GM23248 (cell line): ENCODE measurements at regions of chr12 and their contacts with region 1.

Region 1: DNA sequence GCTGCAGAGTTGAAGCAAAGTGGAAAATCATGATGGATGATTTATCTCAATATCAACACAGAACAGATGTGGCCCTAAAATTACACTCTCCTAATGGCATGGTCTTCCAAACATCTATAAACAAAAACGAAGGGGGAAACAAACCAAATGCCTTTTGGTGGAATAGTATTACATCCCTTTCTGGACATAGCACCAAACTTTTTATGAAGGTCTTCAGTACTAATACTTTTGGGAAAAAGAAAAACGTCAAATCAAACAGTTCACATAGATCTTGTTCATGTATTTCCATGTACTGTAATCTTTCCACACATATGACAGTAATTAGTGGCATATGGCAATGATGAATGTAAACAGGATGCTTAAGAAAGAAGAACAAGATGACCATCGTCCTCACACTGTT is 22.9 kb upstream of the ANAPC7 start:
- DNase-seq: no peak
- H3K4me3 ChIP-seq: no peak overlapping the region
- H3K27ac ChIP-seq: no peak overlapping the region
- H3K4me1 ChIP-seq: peaks cover 7% of the 10 kb centered on the region; the same call in 1 of the 2 replicates
- H3K27me3 ChIP-seq: no peaks in the 10 kb centered on the region

Region 2: DNA sequence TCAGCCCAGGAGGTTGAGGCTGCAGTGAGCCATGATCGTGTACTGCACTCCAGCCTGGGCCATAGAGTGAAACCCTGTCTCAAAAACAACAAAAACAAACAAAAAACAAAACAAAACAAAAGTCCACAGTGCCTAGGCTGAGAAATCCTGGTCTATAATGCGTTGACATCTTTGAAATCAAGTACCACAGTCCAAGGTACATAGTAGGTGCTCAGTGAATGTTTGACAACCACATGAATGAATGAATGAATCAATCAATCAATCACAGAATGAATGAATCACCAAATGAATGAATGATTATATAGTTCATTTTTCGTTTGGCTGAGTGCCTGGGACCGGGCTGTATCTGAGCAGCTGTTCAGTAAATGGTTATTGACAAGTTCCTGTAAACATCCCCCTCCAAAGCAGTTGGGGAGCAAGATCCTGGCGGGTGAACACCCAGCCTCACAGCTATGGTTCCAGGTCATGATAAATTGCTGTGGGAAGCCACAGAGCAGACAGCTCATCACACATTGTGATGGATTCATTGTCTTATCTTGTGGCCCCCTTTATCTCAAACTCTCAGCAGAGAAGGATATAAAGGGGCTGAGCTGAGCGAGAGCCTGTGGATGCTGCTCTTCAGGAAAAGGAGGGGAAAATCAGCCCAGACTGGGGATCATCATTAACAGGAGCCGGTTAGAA is 332.6 kb before region 1 on chr12:
- in situ Hi-C with region 1: loop called (anchors 10 kb)
- DNase-seq: no peak
- H3K4me3 ChIP-seq: no peak overlapping the region
- H3K27ac ChIP-seq: no peak overlapping the region
- H3K4me1 ChIP-seq: no peaks in the 10 kb centered on the region
- H3K27me3 ChIP-seq: no peaks in the 10 kb centered on the region

Region 3: DNA sequence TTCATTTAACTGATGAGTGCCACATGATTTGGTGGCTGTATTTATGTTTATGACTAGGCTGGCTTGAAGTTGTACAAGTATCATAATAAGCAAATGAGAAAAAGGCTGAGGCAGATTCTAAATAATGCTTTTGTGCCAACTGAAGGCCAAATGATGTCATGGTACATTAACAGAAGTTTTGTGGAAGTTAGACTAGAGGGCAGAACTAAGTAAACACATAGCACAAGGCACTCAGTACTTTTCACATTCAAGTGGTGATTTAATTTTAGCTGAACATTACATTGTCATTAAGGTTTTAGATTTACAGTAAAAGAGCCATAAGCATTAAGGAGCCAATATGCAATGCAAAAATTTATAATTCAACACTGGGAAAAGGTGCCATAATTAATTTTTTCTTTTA is 295.2 kb after region 1 on chr12:
- in situ Hi-C with region 1: no loop called
- DNase-seq: no peak
- H3K4me3 ChIP-seq: no peak overlapping the region
- H3K27ac ChIP-seq: no peak overlapping the region
- H3K4me1 ChIP-seq: no peaks in the 10 kb centered on the region
- H3K27me3 ChIP-seq: no peaks in the 10 kb centered on the region